ENCODE measurements at regions of chr4 and their contacts with region 1.

Region 1: DNA sequence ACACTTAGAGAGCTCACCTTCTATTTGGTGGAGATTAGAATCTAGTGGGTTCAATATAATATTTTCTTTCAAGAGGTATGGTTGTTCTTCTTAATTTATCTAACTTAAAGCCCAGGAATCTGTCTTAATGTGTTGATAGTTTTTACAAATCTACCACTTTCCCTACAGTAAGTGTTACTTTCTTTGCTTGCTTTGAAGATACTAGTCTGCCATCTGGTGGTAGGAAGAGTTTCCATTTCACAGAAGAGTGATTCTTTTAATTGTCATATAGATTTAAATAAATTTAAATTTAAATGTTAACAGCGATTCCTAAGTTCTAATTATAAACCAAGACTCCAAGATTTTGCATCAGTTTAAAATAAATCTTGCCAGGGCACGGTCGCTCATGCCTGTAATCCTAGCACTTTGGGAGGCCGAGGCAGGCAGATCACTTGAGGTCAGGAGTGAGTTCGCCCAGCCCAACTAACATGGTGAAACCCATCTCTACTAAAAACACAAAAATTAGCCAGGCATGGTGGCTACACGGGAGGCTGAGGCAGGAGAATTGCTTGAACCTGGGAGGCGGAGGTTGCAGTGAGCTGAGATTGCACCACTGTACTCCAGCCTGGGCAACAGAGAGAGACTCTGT is 43.5 kb downstream of the NUDT9 start:
- DNase-seq: no peak
- ATAC-seq: peak in 4 of 8 donors; percentile 19 to 64 (median 57)
- H3K4me3 ChIP-seq: no peak overlapping the region
- H3K27ac ChIP-seq: peak overlapping the region in 1 of 10 donors; percentile 29
- H3K4me1 ChIP-seq: peaks cover 0 to 14% (median 0%) of the 10 kb centered on the region in 9 donors
- H3K27me3 ChIP-seq: no peaks in the 10 kb centered on the region
- CTCF ChIP-seq: peak; percentile 37 to 84 (median 72)

Region 2: DNA sequence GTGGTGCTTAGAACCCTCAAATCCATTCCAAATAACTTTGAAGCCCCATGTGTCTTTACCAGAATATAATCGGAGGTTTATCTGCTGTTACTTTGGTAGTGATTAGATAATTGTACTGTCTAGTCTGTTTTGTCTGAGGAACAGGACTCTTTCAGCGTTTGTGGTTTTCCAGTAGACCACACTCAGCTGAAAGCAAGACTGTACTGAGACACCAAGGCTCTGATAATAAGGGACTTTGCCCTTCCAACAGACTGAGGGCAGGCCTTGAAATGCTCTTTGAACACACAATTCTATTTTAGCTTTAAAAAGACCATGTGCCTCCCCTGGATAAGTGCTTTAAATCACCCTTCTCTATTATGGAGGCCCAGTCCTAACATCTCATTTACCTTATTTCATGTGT is 321.5 kb before region 1 on chr4:
- intact Hi-C with region 1: loop called in 2 of 10 experiments (anchors 10 kb)
- DNase-seq: no peak
- ATAC-seq: no peak
- H3K4me3 ChIP-seq: no peak overlapping the region
- H3K27ac ChIP-seq: no peak overlapping the region
- H3K4me1 ChIP-seq: peaks cover 0 to 7% (median 0%) of the 10 kb centered on the region in 9 donors
- H3K27me3 ChIP-seq: no peaks in the 10 kb centered on the region
- CTCF ChIP-seq: no peak

Region 3: DNA sequence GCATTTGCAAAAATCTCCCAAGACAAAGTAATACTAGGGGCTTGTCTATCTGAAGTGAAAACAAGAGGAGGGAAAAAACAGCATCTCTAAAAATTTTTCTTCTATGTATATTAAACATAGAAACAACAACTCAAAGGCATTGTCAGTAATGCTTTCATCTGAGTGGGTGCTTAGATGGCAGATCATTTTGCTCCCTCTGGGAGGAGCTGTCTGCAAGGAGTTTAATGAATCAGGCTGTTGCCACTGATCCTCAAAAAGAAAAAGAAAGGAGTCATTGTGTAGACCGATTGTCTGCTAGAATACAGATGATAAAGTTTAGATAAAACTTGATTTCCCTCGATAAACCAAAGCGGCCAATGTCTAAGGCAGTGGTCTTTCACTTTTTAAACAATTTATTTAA is 195.7 kb before region 1 on chr4:
- intact Hi-C with region 1: loop called in 6 of 10 experiments (anchors 5 to 10 kb)
- DNase-seq: peak in 1 of 2 donors; percentile 12
- ATAC-seq: peak in 1 of 8 donors; percentile 76
- H3K4me3 ChIP-seq: no peak overlapping the region
- H3K27ac ChIP-seq: no peak overlapping the region
- H3K4me1 ChIP-seq: no peaks in the 10 kb centered on the region
- H3K27me3 ChIP-seq: no peaks in the 10 kb centered on the region
- CTCF ChIP-seq: peak; percentile 7 to 75 (median 53)

Region 4: DNA sequence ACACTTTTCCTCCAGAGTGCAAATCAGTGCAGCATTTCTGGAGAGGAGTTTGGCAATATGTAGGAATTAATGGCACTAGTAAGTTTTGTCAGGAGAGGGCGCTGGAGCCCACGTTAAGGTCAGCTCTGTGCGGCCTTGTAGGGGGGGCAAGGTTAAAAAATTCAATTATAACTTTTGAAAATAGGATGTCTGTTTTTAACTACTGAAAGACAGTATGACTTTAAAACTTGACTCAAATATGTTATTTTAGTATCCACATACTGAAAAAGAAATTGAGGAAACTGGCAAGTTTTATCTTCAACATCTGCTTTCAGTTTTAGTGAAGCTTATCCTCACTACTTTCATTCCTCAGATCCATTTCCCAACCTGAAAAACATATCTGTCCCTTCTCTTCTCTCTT is 112.3 kb before region 1 on chr4:
- intact Hi-C with region 1: loop called in 2 of 10 experiments (anchors 5 kb)
- DNase-seq: peak; percentile 27 to 63
- ATAC-seq: peak in 6 of 8 donors; percentile 61 to 93 (median 76)
- H3K4me3 ChIP-seq: no peak overlapping the region
- H3K27ac ChIP-seq: peak overlapping the region in 7 of 10 donors; percentile 14 to 75 (median 47)
- H3K4me1 ChIP-seq: peaks cover 0 to 19% (median 6%) of the 10 kb centered on the region in 9 donors
- H3K27me3 ChIP-seq: no peaks in the 10 kb centered on the region
- CTCF ChIP-seq: peak; percentile 46 to 82 (median 66)

Region 5: DNA sequence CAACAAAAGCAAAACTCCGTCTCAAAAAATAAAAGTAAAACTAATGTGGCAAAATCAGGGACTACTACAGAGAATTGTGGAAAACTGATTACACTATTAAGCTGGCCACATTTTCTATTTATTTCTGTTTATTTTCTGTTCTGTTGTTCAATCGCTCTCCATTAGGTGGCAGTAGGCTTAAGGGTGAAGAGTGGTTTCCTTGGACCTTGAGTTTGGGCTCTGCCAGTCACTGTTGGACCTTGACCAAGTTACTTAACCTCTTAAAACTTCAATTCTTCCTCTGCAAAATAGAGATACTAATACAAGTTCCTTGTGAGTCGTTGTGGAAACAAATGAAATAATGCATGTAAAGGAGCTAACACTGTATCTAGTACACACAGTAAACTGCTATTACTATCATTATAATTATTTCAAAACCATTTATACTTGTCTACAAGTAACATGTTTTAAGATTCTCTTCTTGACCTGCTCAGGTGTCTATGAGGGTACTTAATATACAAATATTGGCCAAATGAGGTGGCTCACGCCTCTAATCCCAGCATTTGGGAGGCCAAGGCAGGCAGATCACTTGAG is 90.0 kb before region 1 on chr4:
- intact Hi-C with region 1: loop called in 9 of 10 experiments (anchors 1 to 5 kb)
- DNase-seq: peak in 1 of 2 donors; percentile 30
- ATAC-seq: peak in 7 of 8 donors; percentile 58 to 83 (median 69)
- H3K4me3 ChIP-seq: no peak overlapping the region
- H3K27ac ChIP-seq: peak overlapping the region in 2 of 10 donors; percentile 12 to 31
- H3K4me1 ChIP-seq: peaks cover 0 to 12% (median 4%) of the 10 kb centered on the region in 9 donors
- H3K27me3 ChIP-seq: no peaks in the 10 kb centered on the region
- CTCF ChIP-seq: peak; percentile 20 to 87 (median 72)

Region 6: GRCh38 chr4:87430038-87430437 is 35.8 kb before region 1 on chr4:
- intact Hi-C with region 1: no loop called
- DNase-seq: no peak
- ATAC-seq: no peak
- H3K4me3 ChIP-seq: no peak overlapping the region
- H3K27ac ChIP-seq: no peak overlapping the region
- H3K4me1 ChIP-seq: peaks cover 0 to 28% (median 8%) of the 10 kb centered on the region in 9 donors
- H3K27me3 ChIP-seq: no peaks in the 10 kb centered on the region
- CTCF ChIP-seq: no peak